Ovary (tissue), 10 donors: ENCODE measurements at regions of chr2 and their contacts with region 1.

Region 1: DNA sequence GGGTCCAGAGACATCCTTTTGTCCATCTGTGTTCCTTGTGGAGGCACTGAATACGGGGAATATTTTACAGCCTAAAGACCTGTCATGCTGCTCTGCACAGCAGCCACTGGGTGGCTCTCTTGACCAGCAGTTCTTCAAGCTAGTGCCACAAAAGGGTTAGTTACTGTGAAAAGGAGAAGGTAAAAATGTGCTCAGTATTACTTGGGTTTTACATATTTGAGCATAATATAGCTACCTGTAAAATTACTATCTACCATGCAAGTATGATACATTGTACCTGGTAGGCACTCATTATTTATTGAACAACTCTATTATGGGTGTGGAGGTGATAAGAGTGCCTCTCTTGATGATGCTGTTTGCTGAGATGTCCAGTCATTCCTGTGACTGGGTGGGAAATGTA is 23.6 kb downstream of the FZD5 start:
- DNase-seq: peak; percentile 53 to 68 (median 56)
- H3K4me3 ChIP-seq: no peak overlapping the region
- H3K27ac ChIP-seq: no peak overlapping the region
- H3K4me1 ChIP-seq: no peaks in the 10 kb centered on the region
- H3K27me3 ChIP-seq: no peaks in the 10 kb centered on the region
- CTCF ChIP-seq: peak; percentile 49 to 88 (median 83)
- EP300 ChIP-seq: no peak
- POLR2A ChIP-seq: no peak

Region 2: DNA sequence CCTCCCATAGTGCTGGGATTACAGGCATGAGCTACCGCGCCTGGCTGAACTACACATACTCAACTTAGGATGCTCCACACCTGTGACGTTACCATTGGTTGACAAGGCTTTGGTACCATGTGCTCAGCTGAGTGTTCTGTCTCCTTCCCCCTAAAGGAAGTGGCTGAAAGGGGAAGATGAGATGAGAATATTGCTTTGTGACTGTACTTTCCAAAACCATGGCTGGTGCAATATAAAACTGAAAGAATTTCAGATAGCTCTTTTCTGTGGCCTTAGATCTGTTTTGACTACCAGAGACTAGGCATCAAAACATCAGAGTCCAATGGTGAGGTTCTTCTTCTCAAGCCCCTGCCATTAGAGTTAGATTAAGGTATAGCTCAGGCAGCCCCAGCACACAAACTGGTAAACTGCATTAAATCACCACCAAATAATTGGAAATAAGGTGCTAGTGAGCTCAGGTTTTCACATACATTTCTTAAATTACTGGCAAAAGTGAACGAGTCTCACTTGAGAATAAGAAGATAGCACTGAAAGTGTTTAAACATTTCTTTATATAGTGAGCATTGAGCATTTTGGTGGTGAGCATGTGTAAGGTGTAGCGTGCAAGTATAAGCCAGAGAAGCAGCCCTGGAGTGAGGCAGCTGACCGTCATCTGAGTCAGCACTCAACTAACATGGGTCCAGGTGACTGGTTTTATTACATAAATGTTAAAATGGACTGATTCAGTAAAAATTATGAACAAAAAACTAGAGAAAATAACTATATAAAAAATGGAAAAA is 137.1 kb after region 1 on chr2:
- intact Hi-C with region 1: no loop called
- DNase-seq: no peak
- H3K4me3 ChIP-seq: no peak overlapping the region
- H3K27ac ChIP-seq: no peak overlapping the region
- H3K4me1 ChIP-seq: no peaks in the 10 kb centered on the region
- H3K27me3 ChIP-seq: no peaks in the 10 kb centered on the region
- CTCF ChIP-seq: no peak
- EP300 ChIP-seq: no peak
- POLR2A ChIP-seq: no peak

Region 3: DNA sequence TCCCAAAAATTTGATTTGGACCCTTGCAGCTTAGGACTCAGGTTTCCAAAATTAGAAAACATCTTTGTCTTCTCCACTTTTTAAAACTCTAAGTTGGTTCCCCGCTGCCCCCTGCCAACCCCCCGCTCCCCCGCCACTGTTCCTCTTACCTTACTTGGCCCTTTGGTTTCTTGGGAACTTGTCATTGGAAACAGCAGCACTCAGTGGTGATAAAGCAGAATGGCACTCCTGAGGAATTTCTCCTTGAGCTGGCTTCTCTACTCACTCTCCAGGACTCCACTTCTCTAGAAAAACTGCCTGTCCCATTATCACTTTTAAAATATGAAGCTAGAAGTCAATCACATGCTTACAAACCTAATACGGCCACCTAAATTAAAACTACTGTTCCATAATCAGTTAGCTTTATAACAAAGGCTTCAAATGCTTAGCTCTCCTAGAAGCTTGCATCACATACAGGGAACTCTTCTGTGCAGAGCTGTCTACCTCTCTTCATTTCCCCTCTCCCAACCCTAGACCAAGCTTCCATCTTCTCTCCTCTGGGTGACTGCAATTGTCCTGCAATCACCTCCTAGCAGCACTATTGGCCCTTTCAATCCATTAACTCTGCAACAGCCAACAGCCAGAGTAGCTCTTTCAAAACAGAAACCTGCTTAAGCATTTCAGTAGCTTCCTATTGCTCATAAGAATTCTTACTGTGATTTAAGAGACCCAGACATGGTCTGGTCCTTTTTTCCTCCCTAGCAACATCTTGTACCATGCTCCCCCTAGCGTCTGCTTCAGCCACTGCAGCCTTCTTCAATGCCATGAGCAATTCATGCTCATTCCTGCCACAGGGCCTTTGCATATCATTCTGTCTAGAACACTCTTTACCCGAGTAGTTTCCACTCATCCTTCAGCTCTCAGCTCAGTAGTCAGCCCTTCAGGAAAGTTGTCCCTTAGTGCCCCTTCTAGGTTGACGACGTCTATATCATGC is 294.4 kb after region 1 on chr2:
- intact Hi-C with region 1: loop called in 2 of 4 experiments (anchors 10 kb)
- DNase-seq: peak; percentile 40 to 69 (median 59)
- H3K4me3 ChIP-seq: no peak overlapping the region
- H3K27ac ChIP-seq: no peak overlapping the region
- H3K4me1 ChIP-seq: no peaks in the 10 kb centered on the region
- H3K27me3 ChIP-seq: no peaks in the 10 kb centered on the region
- CTCF ChIP-seq: peak in 2 of 3 donors; percentile 36 to 44
- EP300 ChIP-seq: no peak
- POLR2A ChIP-seq: no peak

Region 4: DNA sequence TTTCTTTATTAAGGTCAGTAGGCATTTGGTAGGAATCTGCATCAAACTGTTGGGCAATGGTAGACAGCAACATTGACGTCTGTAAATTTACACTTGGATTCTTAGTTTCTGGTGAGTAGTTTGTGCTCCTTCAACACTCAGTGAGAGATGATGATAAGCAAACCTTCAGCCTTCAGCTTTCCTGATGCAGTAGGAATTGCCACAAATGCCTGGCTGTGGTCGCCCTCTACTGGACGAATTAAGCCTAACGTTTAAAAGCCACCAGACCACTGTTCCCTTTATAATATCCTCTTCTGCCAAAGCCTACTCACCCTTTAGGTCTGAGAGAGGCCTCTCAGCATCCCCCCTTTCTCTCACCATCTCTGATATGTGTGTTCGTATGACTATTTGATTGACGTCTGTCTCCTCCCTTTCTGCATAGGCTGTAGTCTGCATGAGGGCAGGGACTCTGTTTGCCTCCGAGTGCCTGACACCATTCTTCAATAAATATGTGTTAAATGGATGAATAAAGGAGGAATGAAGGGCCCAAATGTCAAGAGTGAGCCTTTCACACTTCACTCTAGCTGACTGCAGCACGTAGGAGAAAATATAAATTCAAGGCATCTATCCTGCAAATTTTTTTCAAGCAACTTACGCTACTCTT is 326.2 kb after region 1 on chr2:
- intact Hi-C with region 1: loop called in 3 of 4 experiments (anchors 2 to 10 kb)
- DNase-seq: peak; percentile 46 to 74 (median 61)
- H3K4me3 ChIP-seq: no peak overlapping the region
- H3K27ac ChIP-seq: no peak overlapping the region
- H3K4me1 ChIP-seq: no peaks in the 10 kb centered on the region
- H3K27me3 ChIP-seq: no peaks in the 10 kb centered on the region
- CTCF ChIP-seq: peak; percentile 51 to 70 (median 66)
- EP300 ChIP-seq: no peak
- POLR2A ChIP-seq: no peak